Sigmoid colon (tissue), 7 donors: ENCODE measurements at regions of chr12 and their contacts with region 1.

Region 1: GRCh38 chr12:106774005-106774807 is at the start of gene RIC8B:
- DNase-seq: peak; percentile 98
- H3K4me3 ChIP-seq: peak within 1 kb of the TSS; percentile 77 to 97 (median 83)
- H3K27ac ChIP-seq: peak within 1 kb of the TSS; percentile 92 to 94 (median 92)
- H3K4me1 ChIP-seq: peaks cover 0 to 22% (median 13%) of the 10 kb centered on the region in 4 donors
- H3K27me3 ChIP-seq: no peaks in the 10 kb centered on the region
- CTCF ChIP-seq: no peak
- EP300 ChIP-seq: peak in 2 of 4 donors; percentile 38 to 78
- POLR2A ChIP-seq: peak; percentile 77 to 83
- total RNA-seq, gene RIC8B: 17.6 to 27.8 (median 20.0) TPM

Region 2: GRCh38 chr12:106302401-106303201 is 471.6 kb before region 1 on chr12 and contains the start of gene TCP11L2:
- intact Hi-C with region 1: loop called (anchors 5 kb)
- DNase-seq: peak; percentile 93
- H3K4me3 ChIP-seq: peak within 1 kb of the TSS; percentile 60 to 98 (median 92)
- H3K27ac ChIP-seq: peak within 1 kb of the TSS; percentile 83 to 98 (median 95)
- H3K4me1 ChIP-seq: peaks cover 0 to 54% (median 51%) of the 10 kb centered on the region in 4 donors
- H3K27me3 ChIP-seq: no peaks in the 10 kb centered on the region
- CTCF ChIP-seq: no peak
- EP300 ChIP-seq: no peak
- POLR2A ChIP-seq: peak in 1 of 2 donors; percentile 25
- total RNA-seq, gene TCP11L2: 38.4 to 53.5 (median 49.3) TPM

Region 3: GRCh38 chr12:106357549-106358395 is 416.4 kb before region 1 on chr12 and contains the start of gene POLR3B:
- intact Hi-C with region 1: loop called (anchors 5 kb)
- DNase-seq: peak; percentile 98
- H3K4me3 ChIP-seq: peak within 1 kb of the TSS; percentile 57 to 84 (median 76)
- H3K27ac ChIP-seq: peak within 1 kb of the TSS; percentile 93 to 96 (median 94)
- H3K4me1 ChIP-seq: peaks cover 0 to 15% (median 14%) of the 10 kb centered on the region in 4 donors
- H3K27me3 ChIP-seq: no peaks in the 10 kb centered on the region
- CTCF ChIP-seq: peak; percentile 81 to 88 (median 83)
- EP300 ChIP-seq: no peak
- POLR2A ChIP-seq: peak; percentile 70 to 79
- total RNA-seq, gene POLR3B: 3.9 to 5.4 (median 4.8) TPM

Region 4: GRCh38 chr12:106696681-106697417 is 77.4 kb before region 1 on chr12:
- intact Hi-C with region 1: no loop called
- DNase-seq: no peak
- H3K4me3 ChIP-seq: no peak overlapping the region
- H3K27ac ChIP-seq: no peak overlapping the region
- H3K4me1 ChIP-seq: no peaks in the 10 kb centered on the region
- H3K27me3 ChIP-seq: no peaks in the 10 kb centered on the region
- CTCF ChIP-seq: no peak
- EP300 ChIP-seq: no peak
- POLR2A ChIP-seq: no peak

Region 5: GRCh38 chr12:106841510-106842302 is 67.5 kb after region 1 on chr12:
- intact Hi-C with region 1: loop called (anchors 5 kb)
- DNase-seq: no peak
- H3K4me3 ChIP-seq: no peak overlapping the region
- H3K27ac ChIP-seq: peak overlapping the region in 2 of 4 donors; percentile 45 to 49
- H3K4me1 ChIP-seq: peaks cover 0 to 38% (median 35%) of the 10 kb centered on the region in 4 donors
- H3K27me3 ChIP-seq: no peaks in the 10 kb centered on the region
- CTCF ChIP-seq: peak in 3 of 4 experiments; percentile 44 to 58 (median 45)
- EP300 ChIP-seq: no peak
- POLR2A ChIP-seq: no peak

Region 6: GRCh38 chr12:106955377-106956047 is 181.3 kb after region 1 on chr12 and contains the start of gene TMEM263:
- intact Hi-C with region 1: loop called (anchors 10 kb)
- DNase-seq: peak; percentile 98
- H3K4me3 ChIP-seq: peak within 1 kb of the TSS; percentile 72 to 97 (median 95)
- H3K27ac ChIP-seq: peak within 1 kb of the TSS; percentile 99 to 100 (median 100)
- H3K4me1 ChIP-seq: peaks cover 0 to 45% (median 39%) of the 10 kb centered on the region in 4 donors
- H3K27me3 ChIP-seq: no peaks in the 10 kb centered on the region
- CTCF ChIP-seq: no peak
- EP300 ChIP-seq: no peak
- POLR2A ChIP-seq: peak in 1 of 2 donors; percentile 46
- total RNA-seq, gene TMEM263: 39.5 to 51.7 (median 46.4) TPM

Region 7: DNA sequence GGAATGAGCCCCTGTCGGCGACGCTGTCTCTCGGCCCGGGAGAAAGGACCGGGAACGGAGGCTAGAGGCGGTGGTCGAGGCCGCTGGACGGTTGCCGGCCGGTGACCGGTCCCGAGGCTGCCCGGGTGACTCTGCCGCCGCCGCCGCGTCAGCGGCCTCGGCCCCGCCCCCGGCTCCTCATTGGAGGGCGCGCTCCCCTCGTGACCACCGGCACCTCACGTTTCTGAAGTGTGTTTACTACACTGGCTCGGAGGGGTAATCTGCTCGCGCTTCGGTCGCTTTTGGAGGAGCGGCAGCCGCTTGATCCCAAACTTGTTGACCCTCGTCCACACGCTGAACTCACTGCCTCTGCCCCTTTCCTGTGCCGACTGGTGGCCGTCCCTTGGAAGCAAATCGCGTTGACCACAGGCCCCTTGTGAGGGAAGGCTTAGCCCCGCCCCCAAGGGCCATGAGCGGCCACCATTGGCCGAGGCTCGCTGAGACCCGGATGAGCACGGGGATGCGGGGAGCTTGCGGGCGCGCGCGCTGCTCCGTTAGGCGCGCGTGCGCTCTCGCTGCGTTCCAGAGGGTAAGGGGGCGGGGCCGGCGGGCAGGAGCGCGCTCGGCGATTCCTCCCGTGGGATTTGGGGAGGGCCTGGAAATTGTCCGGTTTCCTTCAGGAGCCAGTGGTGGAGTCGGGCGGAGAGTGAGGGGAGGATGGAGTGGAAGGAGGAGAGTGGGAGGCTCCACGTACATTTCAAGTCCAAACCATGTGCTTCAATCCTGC is 319.4 kb after region 1 on chr12 and contains the start of gene CRY1:
- intact Hi-C with region 1: loop called (anchors 1 kb)
- DNase-seq: peak; percentile 98
- H3K4me3 ChIP-seq: peak within 1 kb of the TSS; percentile 83 to 98 (median 88)
- H3K27ac ChIP-seq: peak within 1 kb of the TSS; percentile 95 to 100 (median 97)
- H3K4me1 ChIP-seq: peaks cover 0 to 36% (median 23%) of the 10 kb centered on the region in 4 donors
- H3K27me3 ChIP-seq: no peaks in the 10 kb centered on the region
- CTCF ChIP-seq: no peak
- EP300 ChIP-seq: peak in 2 of 4 donors; percentile 43 to 72
- POLR2A ChIP-seq: peak; percentile 72 to 95
- total RNA-seq, gene CRY1: 20.3 to 40.4 (median 27.3) TPM